Left colon (tissue), 2 donors: ENCODE measurements at regions of chr11 and their contacts with region 1.

Region 1: GRCh38 chr11:34366522-34366921 is 8.7 kb upstream of the ABTB2 start:
- DNase-seq: peak in 1 of 2 donors; percentile 54
- ATAC-seq: peak; percentile 27

Region 2: DNA sequence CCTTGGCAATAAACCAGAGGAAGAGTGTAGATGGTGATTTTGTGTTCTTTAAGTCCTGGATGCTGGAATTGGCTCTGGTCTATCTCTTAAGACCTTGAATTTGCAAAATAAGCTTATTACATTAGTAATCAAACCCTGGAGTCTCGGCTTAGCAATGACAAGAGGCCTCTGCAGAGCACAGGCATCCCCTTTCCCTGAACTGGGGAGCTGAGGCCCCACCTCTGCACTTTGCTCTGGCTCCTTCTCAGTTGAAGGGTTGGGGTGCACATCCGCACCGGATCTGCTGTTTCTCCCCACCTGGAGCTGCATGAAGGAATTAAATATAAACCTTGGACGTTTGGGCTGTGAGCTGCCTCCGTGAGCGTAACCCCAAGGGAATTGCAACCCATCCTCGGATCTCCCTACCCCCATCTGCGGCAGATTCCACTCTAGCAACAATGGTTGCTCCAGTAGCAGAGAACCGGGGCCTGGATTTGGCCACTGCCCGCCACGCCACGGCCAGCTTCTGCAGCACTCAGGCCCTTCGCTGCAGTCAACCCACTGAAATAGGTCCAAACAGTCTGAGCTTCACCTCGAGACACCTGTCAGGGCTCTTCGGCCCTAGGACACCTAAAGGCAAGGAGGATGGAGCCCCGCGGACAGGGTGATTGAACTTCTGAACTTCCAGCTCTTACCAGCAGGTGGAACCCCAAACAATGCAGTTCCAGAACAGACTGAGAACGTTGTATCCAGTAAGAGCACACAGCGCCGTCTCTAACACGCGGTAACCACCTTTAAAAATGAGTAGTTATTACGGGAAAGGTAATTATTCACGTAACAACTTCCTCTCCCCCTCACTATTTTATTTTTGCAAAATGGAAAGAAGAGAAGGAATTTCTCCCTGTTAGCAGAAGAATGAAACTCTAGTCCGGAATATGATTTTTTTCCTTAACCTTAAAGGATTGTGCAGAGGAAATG is 369.7 kb before region 1 on chr11:
- intact Hi-C with region 1: loop called in 1 of 2 experiments (anchors 10 kb)
- DNase-seq: peak; percentile 59 to 72
- ATAC-seq: peak; percentile 99